Naive thymus-derived CD4-positive, alpha-beta T cell (primary cell): ENCODE measurements at regions of chr14 and their contacts with region 1.

Region 1: DNA sequence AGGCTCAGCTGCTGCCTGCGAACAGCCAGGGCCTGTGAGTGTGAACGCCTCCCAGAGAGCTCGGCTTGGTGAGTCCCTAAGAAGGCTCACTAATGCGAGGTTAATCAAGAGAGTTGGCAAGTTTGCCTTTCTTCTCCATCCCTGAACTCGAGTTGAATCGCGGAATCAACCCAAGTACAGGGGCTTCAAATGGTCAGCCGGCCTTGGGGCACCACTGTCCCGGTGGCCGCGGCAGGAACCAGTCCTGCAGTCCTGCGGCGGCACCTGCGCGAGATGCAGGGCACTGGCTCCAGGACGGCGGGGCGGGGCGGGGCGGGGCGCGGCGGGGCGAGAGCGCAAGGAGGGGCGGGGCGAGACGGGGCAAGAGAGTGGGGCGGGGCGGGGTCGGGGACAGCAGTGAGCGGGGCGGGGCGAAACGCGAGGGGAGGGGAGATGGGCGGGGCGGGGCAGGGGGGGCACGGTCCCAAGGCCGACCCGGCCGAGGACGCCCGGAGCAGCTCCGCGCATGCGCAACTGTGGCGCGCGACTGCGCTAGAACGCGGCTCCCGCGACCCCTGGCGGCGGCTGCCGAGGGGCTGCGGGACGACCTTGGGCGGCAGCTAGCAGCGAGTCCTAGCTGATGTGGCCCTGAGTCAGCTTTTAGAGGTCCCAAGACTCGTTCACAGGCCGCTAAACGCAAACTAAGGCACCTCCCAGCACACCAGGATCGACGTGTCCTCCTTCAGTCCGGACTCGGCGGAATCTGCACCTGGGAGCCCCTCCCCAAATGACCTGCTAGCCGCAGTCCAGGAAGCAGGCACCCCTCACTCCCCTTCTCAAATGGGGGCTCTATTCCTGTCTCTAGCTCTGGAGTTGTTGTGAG is 58.0 kb downstream of the TTC7B start:
- DNase-seq: peak; percentile 83 to 98 (median 92)
- ATAC-seq: peak; percentile 94
- H3K4me3 ChIP-seq: peak overlapping the region; percentile 79
- H3K4me3 Mint-ChIP-seq: peak overlapping the region; percentile 75 to 92 (median 86)
- H3K27ac ChIP-seq: peak overlapping the region; percentile 75
- H3K27ac Mint-ChIP-seq: peak overlapping the region; percentile 80 to 95 (median 90)
- H3K4me1 ChIP-seq: peaks cover 7 to 21% of the 10 kb centered on the region in 2 donors
- H3K4me1 Mint-ChIP-seq: peaks cover 12 to 29% (median 23%) of the 10 kb centered on the region in 7 donors
- H3K27me3 ChIP-seq: no peaks in the 10 kb centered on the region
- H3K27me3 Mint-ChIP-seq: peaks cover 0 to 33% (median 6%) of the 10 kb centered on the region in 5 donors

Region 2: GRCh38 chr14:90301668-90302090 is 456.6 kb before region 1 on chr14:
- CTCF ChIA-PET with region 1: interaction called, 7 read pairs
- POLR2A ChIA-PET with region 1: no interaction called
- intact Hi-C with region 1: loop called in 1 of 2 experiments (anchors 1 kb)
- DNase-seq: peak in 4 of 9 donors; percentile 2 to 28 (median 16)
- ATAC-seq: no peak
- H3K4me3 ChIP-seq: no peak overlapping the region
- H3K4me3 Mint-ChIP-seq: no peak overlapping the region
- H3K27ac ChIP-seq: no peak overlapping the region
- H3K27ac Mint-ChIP-seq: peak overlapping the region in 7 of 9 donors; percentile 26 to 82 (median 56)
- H3K4me1 ChIP-seq: no peaks in the 10 kb centered on the region
- H3K4me1 Mint-ChIP-seq: peaks cover 13 to 31% (median 20%) of the 10 kb centered on the region in 7 donors
- H3K27me3 ChIP-seq: no peaks in the 10 kb centered on the region
- H3K27me3 Mint-ChIP-seq: no peaks in the 10 kb centered on the region

Region 3: DNA sequence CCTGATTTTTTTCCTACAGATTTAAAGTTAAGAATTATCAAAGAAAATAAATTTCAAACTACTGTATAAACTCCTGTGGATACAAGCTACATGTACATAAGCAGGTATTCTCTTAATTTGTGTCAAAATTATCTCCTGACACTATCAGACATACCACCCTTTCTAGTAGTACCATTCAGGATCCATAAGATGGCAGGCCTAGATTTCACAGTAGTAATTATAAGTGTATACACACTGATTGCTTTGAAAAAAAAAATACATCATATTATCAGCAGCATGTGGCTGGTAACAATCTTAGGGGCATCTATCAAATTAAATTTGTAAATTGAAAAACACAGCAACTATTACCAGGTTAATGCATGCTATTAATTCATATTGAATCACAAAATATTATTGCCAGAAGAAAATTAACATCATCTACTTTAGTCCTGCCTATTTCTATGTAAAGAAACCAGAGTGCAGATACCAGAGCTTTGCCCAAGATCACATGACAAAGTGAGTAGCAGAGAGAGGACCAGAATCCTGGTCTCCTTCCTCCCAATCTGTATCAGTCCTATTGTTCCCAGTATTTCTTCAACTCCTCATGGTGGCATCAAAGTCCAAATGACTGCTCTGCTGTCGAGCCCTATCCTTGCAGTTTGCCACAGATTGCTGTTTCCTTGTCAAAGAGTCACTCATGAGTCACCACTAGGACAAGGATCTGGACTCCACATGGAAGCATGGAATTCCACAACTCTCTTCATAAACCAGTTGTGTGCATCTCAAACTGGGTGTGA is 389.1 kb before region 1 on chr14:
- CTCF ChIA-PET with region 1: interaction called, 22 read pairs
- POLR2A ChIA-PET with region 1: no interaction called
- intact Hi-C with region 1: loop called in 1 of 2 experiments (anchors 1 kb)
- DNase-seq: peak in 7 of 9 donors; percentile 25 to 60 (median 39)
- ATAC-seq: peak; percentile 90
- H3K4me3 ChIP-seq: no peak overlapping the region
- H3K4me3 Mint-ChIP-seq: no peak overlapping the region
- H3K27ac ChIP-seq: no peak overlapping the region
- H3K27ac Mint-ChIP-seq: no peak overlapping the region
- H3K4me1 ChIP-seq: no peaks in the 10 kb centered on the region
- H3K4me1 Mint-ChIP-seq: peaks cover 0 to 8% (median 4%) of the 10 kb centered on the region in 7 donors
- H3K27me3 ChIP-seq: no peaks in the 10 kb centered on the region
- H3K27me3 Mint-ChIP-seq: peaks cover 0 to 25% (median 0%) of the 10 kb centered on the region in 5 donors

Region 4: GRCh38 chr14:90721619-90722305 is 36.5 kb before region 1 on chr14:
- CTCF ChIA-PET with region 1: no interaction called
- POLR2A ChIA-PET with region 1: interaction called, 5 read pairs
- intact Hi-C with region 1: loop called in 1 of 2 experiments (anchors 2 kb)
- DNase-seq: no peak
- ATAC-seq: no peak
- H3K4me3 ChIP-seq: no peak overlapping the region
- H3K4me3 Mint-ChIP-seq: no peak overlapping the region
- H3K27ac ChIP-seq: no peak overlapping the region
- H3K27ac Mint-ChIP-seq: no peak overlapping the region
- H3K4me1 ChIP-seq: no peaks in the 10 kb centered on the region
- H3K4me1 Mint-ChIP-seq: peaks cover 0 to under 1% (median 0%) of the 10 kb centered on the region in 7 donors
- H3K27me3 ChIP-seq: no peaks in the 10 kb centered on the region
- H3K27me3 Mint-ChIP-seq: peaks cover 0 to 4% (median 2%) of the 10 kb centered on the region in 5 donors

Region 5: DNA sequence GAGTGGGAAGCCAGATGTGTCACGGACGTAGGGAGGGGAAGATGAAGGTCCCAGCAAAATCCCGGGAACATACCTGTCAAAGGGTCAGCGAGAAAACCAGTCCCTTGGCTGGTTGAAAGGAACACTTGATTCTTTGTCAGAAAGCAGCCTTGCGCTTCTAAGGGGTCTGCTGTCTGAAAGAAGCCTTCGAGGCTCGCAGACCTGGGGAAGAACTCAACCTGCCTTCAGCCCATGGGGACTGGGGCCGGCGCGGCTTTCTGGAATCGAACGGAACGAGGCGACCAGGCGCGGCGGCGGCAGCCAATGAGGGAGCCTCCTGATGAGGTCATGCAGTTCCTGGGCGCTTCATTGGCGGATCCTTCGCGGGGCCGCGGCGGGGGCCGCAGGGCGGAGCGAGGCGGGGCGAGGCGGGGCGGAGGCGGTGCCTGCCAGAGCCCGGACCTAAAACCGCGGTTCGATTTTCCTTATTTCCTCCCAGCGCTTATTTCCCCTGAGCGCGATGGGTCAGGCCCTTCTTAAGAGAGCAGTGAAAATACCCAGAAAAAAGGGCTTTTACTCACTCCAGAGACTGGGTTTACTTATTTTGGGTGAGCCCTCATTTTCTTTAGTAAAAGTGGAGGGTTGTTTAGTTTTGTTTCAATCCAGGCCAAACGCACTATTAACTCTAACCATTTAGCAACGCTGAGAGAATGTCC is 69.8 kb after region 1 on chr14:
- CTCF ChIA-PET with region 1: no interaction called
- POLR2A ChIA-PET with region 1: interaction called, 3 read pairs
- intact Hi-C with region 1: loop called (anchors 1 to 2 kb)
- DNase-seq: peak; percentile 83 to 94 (median 85)
- ATAC-seq: peak; percentile 100
- H3K4me3 ChIP-seq: peak overlapping the region; percentile 61
- H3K4me3 Mint-ChIP-seq: peak overlapping the region; percentile 69 to 91 (median 84)
- H3K27ac ChIP-seq: peak overlapping the region; percentile 69
- H3K27ac Mint-ChIP-seq: peak overlapping the region; percentile 79 to 96 (median 86)
- H3K4me1 ChIP-seq: peaks cover 14% of the 10 kb centered on the region in 2 donors
- H3K4me1 Mint-ChIP-seq: peaks cover 7 to 28% (median 18%) of the 10 kb centered on the region in 7 donors
- H3K27me3 ChIP-seq: no peaks in the 10 kb centered on the region
- H3K27me3 Mint-ChIP-seq: peaks cover 0 to 3% (median 0%) of the 10 kb centered on the region in 5 donors

Region 6: DNA sequence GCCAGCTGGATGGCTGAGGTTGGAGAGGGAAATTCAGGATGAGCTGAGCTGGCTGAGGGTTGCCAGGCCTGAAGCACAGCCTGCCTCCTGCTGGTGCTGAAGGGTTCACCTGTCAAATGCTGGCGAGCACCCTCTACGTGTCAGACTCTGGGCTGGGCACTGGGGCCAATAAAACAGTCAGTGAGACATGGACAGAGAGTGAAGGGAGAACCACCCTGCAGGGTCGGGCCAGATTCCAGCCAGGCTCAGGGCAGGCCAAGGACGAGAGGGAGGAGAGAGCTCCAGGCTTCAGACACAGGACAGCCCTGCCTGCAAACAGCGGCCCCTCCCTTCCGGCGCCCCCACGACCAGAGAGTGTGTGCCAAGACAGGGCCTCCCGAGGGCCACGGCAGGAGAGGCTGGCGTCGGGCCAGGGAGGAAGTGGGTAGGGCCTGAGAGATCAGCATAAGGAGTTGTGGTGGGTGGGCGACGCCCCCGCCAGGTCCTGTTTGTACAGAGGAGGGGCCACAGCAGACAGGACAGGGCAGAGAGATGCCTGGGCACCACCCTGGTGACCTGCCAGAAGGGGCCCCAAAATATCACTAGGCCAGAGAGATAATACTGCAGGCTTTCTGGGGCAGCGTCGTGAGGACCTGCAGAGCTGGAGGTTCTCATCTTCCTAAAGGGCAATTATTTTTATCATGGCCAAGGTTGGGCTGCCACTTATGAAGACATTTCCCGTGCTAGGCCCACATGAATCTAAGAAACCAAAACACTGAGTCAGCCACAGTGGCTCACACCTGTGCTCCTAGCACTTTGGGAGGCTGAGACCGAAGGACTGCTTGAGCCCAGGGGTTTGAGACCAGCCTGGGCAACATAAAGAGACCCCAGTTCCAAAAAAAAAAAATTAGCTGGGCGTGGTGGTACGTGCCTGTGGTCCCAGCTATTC is 559.4 kb after region 1 on chr14:
- CTCF ChIA-PET with region 1: no interaction called
- POLR2A ChIA-PET with region 1: no interaction called
- intact Hi-C with region 1: no loop called
- DNase-seq: peak; percentile 58 to 86 (median 84)
- ATAC-seq: peak; percentile 60
- H3K4me3 ChIP-seq: peak overlapping the region; percentile 39
- H3K4me3 Mint-ChIP-seq: peak overlapping the region; percentile 73 to 88 (median 81)
- H3K27ac ChIP-seq: peak overlapping the region; percentile 82
- H3K27ac Mint-ChIP-seq: peak overlapping the region; percentile 93 to 99 (median 98)
- H3K4me1 ChIP-seq: peaks cover 58 to 61% of the 10 kb centered on the region in 2 donors
- H3K4me1 Mint-ChIP-seq: peaks cover 55 to 88% (median 70%) of the 10 kb centered on the region in 7 donors
- H3K27me3 ChIP-seq: no peaks in the 10 kb centered on the region
- H3K27me3 Mint-ChIP-seq: no peaks in the 10 kb centered on the region

Region 7: GRCh38 chr14:92039719-92040430 is 1281.6 kb after region 1 on chr14 and contains the start of gene TRIP11:
- CTCF ChIA-PET with region 1: no interaction called
- POLR2A ChIA-PET with region 1: no interaction called
- intact Hi-C with region 1: loop called in 1 of 2 experiments (anchors 2 kb)
- DNase-seq: peak; percentile 88 to 97 (median 94)
- ATAC-seq: peak; percentile 96
- H3K4me3 ChIP-seq: peak within 1 kb of the TSS; percentile 86
- H3K4me3 Mint-ChIP-seq: peak within 1 kb of the TSS; percentile 91 to 99 (median 96)
- H3K27ac ChIP-seq: peak within 1 kb of the TSS; percentile 84
- H3K27ac Mint-ChIP-seq: peak within 1 kb of the TSS in 7 of 9 donors; percentile 96 to 100 (median 98)
- H3K4me1 ChIP-seq: peaks cover 20 to 21% of the 10 kb centered on the region in 2 donors
- H3K4me1 Mint-ChIP-seq: peaks cover 6 to 50% (median 35%) of the 10 kb centered on the region in 7 donors
- H3K27me3 ChIP-seq: no peaks in the 10 kb centered on the region
- H3K27me3 Mint-ChIP-seq: no peaks in the 10 kb centered on the region
- total RNA-seq, gene TRIP11: 34.1 to 72.4 (median 58.4) TPM